Activated CD4-positive, alpha-beta memory T cell treated with anti-CD3 and anti-CD28 coated beads for 36 hours (primary cell): ENCODE measurements at regions of chr9 and their contacts with region 1.

Region 1: DNA sequence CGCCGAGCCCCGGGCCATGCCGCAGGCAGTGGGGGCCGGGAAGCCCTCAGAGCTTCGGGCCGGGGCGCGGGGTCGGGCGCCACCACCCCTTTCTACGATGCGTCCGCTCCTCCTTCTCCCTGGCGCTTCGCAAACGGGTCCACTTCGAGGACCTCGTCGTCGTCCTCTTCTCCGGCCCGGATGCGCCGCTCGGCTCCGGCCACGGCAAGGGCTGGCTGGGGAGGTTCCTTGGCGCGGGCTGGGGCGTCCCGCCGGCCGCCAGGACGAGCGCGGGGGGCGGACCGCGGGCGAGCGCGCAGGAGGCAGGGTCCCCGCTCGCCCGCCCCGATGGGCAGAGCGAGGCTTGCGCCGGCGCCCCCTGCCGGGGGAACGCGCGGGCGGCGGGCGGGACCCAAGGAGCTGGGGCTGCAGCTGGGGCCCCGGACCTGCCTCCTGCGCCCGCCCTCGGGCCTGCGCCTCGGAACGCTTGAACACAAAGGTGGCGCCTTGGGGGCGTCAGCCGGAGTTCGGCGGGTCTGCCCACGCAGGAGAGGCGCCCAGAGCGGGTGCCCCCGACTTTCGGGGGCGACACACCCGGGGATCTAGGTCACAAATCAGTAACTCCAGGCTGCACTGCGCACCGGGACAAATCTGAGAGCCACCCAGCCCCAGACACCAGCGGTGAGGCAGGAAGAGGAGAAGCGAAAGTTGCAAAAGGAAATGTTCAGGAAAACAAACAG is at the start of gene ROR2:
- DNase-seq: peak; percentile 59
- H3K4me3 Mint-ChIP-seq: peak within 1 kb of the TSS; percentile 25
- H3K27ac Mint-ChIP-seq: no peak within 1 kb of the TSS
- H3K4me1 Mint-ChIP-seq: peaks cover 4% of the 10 kb centered on the region
- H3K27me3 Mint-ChIP-seq: peaks cover 64% of the 10 kb centered on the region
- total RNA-seq, gene ROR2: 0.05 to 0.31 TPM

Region 2: GRCh38 chr9:91711755-91712601 is 238.1 kb before region 1 on chr9:
- CTCF ChIA-PET with region 1: no interaction called
- POLR2A ChIA-PET with region 1: no interaction called
- intact Hi-C with region 1: no loop called
- DNase-seq: peak; percentile 87
- H3K4me3 Mint-ChIP-seq: no peak overlapping the region
- H3K27ac Mint-ChIP-seq: no peak overlapping the region
- H3K4me1 Mint-ChIP-seq: no peaks in the 10 kb centered on the region
- H3K27me3 Mint-ChIP-seq: peaks cover 25% of the 10 kb centered on the region

Region 3: DNA sequence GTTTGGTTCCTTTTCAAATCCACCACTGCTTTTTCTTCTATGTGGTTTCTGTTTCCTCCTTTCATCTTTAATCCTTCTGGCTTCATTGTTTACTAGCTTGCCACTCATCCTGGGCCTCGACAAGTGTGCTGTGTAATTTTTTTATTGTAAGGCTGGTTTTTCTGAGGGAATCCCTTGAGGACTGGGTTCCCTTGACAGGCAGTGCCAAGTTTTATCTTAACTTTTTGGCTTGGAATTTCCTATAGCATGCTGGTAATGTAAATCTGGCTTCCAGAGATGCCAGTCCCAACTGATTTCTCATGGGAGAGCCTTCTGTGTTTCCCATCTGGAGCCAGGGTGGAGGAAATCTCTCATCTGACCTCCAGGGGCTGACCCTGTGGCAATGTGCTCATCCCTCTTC is 184.8 kb before region 1 on chr9:
- CTCF ChIA-PET with region 1: interaction called, 10 read pairs
- POLR2A ChIA-PET with region 1: no interaction called
- intact Hi-C with region 1: no loop called
- DNase-seq: no peak
- H3K4me3 Mint-ChIP-seq: no peak overlapping the region
- H3K27ac Mint-ChIP-seq: no peak overlapping the region
- H3K4me1 Mint-ChIP-seq: no peaks in the 10 kb centered on the region
- H3K27me3 Mint-ChIP-seq: peaks cover 29% of the 10 kb centered on the region

Region 4: DNA sequence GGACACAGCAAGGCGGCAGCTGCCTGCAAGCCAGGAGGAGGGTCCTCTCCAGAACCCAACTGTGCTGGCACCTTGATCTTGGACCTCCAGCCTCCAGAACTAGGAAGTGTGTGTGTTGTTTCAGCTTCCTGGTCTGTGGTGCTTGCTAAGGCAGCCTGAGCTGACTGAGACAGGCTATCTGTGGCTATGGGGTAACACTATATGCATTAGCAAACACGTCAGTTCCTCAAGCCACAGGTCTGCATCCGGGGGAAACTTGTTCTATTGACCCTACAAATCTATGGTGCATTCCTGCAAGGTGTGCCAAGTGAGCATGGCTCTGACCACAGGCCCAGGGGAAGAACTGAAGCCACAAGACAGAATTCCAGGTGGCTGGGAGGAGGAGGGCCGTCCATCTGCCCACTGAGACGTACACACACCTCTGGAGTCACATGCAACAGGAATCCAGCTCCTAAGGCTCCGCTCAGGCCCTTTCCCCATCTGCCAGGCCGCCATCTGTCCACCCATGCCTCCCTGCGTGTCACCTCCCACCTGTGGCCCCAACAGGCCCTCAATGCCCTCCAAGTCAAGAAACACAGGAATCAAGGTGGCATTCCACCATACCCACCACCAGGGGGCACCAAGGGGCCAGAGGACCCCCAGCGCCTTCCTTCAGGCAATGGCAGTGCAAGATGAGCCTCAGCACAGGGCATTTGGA is 174.9 kb before region 1 on chr9:
- CTCF ChIA-PET with region 1: interaction called, 25 read pairs
- POLR2A ChIA-PET with region 1: no interaction called
- intact Hi-C with region 1: loop called (anchors 5 kb)
- DNase-seq: peak; percentile 77
- H3K4me3 Mint-ChIP-seq: no peak overlapping the region
- H3K27ac Mint-ChIP-seq: no peak overlapping the region
- H3K4me1 Mint-ChIP-seq: no peaks in the 10 kb centered on the region
- H3K27me3 Mint-ChIP-seq: peaks cover 14% of the 10 kb centered on the region

Region 5: DNA sequence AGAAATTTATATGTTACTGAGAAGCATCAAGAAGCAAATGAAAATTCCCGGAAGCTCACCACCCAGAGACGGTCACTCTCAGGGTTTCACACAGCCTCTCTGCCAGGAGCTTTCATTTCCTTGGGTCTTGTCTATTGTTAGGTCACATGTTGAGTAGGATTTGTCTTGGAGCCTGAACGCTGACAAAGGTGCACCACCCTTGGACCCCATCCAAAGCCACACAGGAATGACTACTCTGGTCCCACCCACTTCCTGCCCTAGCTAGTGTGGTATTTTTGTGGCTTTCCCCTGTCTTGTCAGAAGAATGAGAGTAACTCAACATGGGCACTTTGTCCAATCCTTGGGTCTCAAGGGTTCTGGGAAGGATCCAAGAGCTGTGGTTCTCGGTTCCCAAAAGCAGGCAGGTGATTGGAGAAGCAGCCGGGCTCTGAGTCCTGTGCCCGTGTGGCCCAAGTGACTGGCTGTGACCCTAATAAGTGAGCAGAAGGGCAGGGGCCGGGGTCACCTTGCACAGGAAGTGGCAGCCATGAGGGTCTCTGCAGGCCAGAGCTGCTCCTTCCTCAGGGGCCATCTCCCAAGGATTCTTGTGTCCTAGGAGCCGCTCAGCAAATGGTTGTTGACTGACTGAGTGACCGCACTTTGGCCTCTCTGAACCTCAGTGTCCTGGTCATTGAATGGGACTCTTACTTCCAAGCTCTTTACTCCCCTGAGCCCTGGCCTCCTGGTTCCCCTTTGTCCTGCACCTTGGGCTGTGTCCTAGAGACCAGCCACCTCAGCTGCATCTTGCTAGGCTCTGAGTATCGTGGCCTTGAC is 1004.1 kb after region 1 on chr9:
- CTCF ChIA-PET with region 1: no interaction called
- POLR2A ChIA-PET with region 1: no interaction called
- intact Hi-C with region 1: no loop called
- DNase-seq: peak; percentile 94
- H3K4me3 Mint-ChIP-seq: peak overlapping the region; percentile 64
- H3K27ac Mint-ChIP-seq: peak overlapping the region; percentile 96
- H3K4me1 Mint-ChIP-seq: peaks cover 74% of the 10 kb centered on the region
- H3K27me3 Mint-ChIP-seq: no peaks in the 10 kb centered on the region